Gastrocnemius medialis (tissue), 4 donors: ENCODE measurements at regions of chr16 and their contacts with region 1.

Region 1: DNA sequence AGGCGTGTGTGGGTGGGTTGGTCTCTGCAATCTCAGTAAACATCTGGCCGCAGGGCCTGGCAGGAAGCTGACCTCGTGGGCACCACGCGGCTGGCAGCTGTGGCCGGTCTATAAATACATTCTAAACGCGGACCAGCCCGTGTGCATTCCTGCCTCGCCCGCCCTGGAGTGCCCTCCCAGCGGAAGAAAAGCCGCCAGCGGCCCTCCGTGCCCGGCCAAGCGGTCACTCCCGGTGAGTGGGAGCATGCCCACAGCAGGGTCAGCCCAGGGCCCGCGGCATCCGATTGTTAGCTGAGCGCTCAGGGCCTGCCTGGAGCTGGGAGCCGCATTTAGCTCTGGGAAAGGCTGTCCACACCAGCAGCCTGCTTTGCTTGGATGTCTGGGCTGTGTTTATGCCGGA is 10.3 kb downstream of the ZNF469 start:
- DNase-seq: peak; percentile 68 to 84
- ATAC-seq: peak; percentile 69 to 75
- H3K4me3 ChIP-seq: peak overlapping the region in 1 of 4 donors; percentile 13
- H3K27ac ChIP-seq: peak overlapping the region; percentile 71 to 98 (median 74)
- H3K4me1 ChIP-seq: peaks cover 27 to 57% of the 10 kb centered on the region in 2 donors
- H3K27me3 ChIP-seq: no peaks in the 10 kb centered on the region
- CTCF ChIP-seq: no peak
- POLR2A ChIP-seq: peak in 1 of 2 donors; percentile 38

Region 2: GRCh38 chr16:87877938-87878507 is 515.0 kb before region 1 on chr16:
- in situ Hi-C with region 1: no loop called
- intact Hi-C with region 1: no loop called
- DNase-seq: no peak
- ATAC-seq: no peak
- H3K4me3 ChIP-seq: no peak overlapping the region
- H3K27ac ChIP-seq: no peak overlapping the region
- H3K4me1 ChIP-seq: no peaks in the 10 kb centered on the region
- H3K27me3 ChIP-seq: no peaks in the 10 kb centered on the region
- CTCF ChIP-seq: peak in 2 of 5 experiments; percentile 15 to 28
- POLR2A ChIP-seq: no peak

Region 3: DNA sequence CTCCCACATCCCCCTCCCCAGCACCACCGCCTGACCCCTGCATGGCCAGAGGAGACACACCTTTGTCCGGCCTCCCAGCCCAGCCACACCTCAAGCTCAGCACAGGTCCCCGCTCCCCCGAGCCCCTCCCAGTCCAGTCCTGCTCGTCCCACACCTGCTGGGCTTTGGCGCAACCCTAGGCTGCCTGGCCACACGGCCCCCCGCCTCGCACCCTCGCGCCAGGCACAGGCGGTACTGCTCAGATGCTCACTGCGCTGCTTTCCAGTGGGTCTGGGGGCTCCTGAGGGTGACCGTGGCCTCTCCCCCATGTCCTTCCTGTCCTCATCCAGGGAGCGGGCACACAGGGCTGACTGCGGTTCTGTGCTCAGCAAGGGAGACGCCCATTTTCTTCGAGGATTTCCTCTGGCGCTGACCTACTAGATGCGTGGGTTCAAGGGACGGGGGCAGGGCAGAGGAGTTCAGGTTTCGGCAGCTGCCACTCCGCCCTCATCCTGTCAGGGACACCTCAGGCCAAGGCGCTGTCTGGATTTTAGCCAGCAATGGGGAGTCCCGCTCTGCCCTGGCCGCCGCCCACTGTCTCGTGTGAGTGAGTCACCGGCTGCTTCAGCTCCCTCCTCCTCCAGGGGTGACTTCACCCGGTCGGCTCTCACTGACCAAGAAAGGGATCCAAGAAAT is 128.3 kb before region 1 on chr16:
- in situ Hi-C with region 1: no loop called
- intact Hi-C with region 1: loop called (anchors 5 kb)
- DNase-seq: peak; percentile 96 to 99
- ATAC-seq: peak; percentile 88 to 92
- H3K4me3 ChIP-seq: peak overlapping the region in 1 of 4 donors; percentile 21
- H3K27ac ChIP-seq: peak overlapping the region in 3 of 4 donors; percentile 34 to 63 (median 44)
- H3K4me1 ChIP-seq: peaks cover 4 to 26% of the 10 kb centered on the region in 2 donors
- H3K27me3 ChIP-seq: no peaks in the 10 kb centered on the region
- CTCF ChIP-seq: no peak
- POLR2A ChIP-seq: no peak

Region 4: GRCh38 chr16:88533932-88534732 is 141.1 kb after region 1 on chr16:
- in situ Hi-C with region 1: no loop called
- intact Hi-C with region 1: loop called (anchors 5 kb)
- DNase-seq: peak; percentile 42 to 67
- ATAC-seq: peak; percentile 90
- H3K4me3 ChIP-seq: peak overlapping the region; percentile 45 to 79 (median 66)
- H3K27ac ChIP-seq: peak overlapping the region; percentile 62 to 88 (median 84)
- H3K4me1 ChIP-seq: peaks cover 7 to 25% of the 10 kb centered on the region in 2 donors
- H3K27me3 ChIP-seq: peaks cover 0 to 3% (median 2%) of the 10 kb centered on the region in 3 donors
- CTCF ChIP-seq: peak in 1 of 5 experiments; percentile 19
- POLR2A ChIP-seq: peak; percentile 68 to 80